Right cardiac atrium (tissue), 5 donors: ENCODE measurements at regions of chr1 and their contacts with region 1.

Region 1: DNA sequence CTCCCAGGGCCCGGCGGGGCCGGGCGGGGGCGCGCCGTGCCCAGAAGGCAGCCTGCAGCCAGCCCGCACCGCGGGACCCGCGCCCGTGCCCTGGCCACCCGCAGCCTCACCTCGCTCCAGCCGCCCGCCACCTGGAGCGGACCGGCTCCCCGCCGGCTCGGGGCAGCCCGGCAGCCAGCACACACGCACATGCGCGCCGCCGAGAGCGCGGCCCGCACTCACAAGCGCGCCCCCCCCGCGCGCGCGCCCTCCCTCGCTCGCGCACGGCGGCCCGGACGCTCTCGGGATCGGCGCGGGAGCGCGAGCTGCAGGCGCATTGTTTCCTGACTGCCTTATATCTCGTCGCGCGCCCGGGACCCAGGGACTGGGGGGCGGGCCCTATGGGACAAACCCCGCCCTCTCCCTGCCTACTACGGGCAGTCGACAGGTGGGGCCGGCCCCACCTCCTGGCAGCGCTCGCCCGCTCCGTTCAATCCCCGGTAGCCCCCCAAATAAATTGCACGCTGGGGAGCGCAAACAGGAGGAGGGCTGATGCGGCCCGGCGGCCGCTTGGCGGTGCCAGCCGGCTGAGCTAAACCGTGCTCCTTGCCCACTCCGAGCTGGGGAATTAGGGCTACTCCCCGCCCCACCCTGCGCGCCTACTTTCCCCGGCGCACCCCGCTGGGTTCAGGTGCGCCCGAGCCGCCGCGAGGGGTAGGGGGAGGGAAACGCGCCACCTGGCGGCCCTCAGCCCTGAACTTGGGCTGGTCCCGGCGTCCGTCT is at the start of gene MYCL:
- DNase-seq: peak; percentile 52 to 86 (median 82)
- ATAC-seq: peak; percentile 84 to 88
- H3K4me3 ChIP-seq: peak within 1 kb of the TSS; percentile 80
- H3K27ac ChIP-seq: no peak within 1 kb of the TSS
- H3K4me1 ChIP-seq: no peaks in the 10 kb centered on the region
- H3K27me3 ChIP-seq: no peaks in the 10 kb centered on the region
- total RNA-seq, gene MYCL: 0.33 to 0.97 (median 0.57) TPM

Region 2: DNA sequence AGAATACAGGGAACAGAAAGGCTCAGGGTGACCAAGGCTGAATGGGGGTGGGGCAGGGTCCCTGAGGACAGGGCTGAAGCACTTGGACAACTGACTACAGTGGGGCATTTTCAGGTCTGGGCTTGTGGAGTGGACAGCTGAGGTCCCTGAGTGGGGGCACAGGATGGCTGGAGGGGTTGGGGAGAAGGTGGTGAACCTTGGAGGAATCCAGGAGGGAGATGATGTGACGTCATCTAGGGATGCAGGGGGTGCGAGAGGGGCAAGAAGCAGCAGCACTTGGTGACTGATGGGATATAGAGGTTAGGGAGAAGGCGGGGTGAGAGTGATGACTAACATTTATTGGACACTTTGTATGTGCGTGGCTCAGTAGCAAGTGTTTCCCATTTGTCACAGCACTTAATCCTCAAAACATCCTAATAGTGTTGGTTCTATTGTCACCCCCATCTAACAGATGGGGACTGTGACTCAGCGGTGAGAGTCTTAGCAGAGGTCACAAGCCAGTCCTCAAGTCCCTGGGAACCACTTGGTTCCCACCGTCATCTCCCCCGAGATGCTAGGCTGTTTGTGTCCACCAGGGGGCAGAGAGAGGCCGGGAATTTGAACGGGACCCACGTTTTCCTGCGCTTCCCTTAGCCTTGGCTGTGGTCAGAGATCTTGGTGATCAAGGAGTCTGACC is 85.3 kb before region 1 on chr1:
- intact Hi-C with region 1: loop called in 3 of 4 experiments (anchors 5 to 10 kb)
- DNase-seq: peak; percentile 62 to 86 (median 82)
- ATAC-seq: peak; percentile 66 to 80
- H3K4me3 ChIP-seq: no peak overlapping the region
- H3K27ac ChIP-seq: no peak overlapping the region
- H3K4me1 ChIP-seq: no peaks in the 10 kb centered on the region
- H3K27me3 ChIP-seq: no peaks in the 10 kb centered on the region

Region 3: GRCh38 chr1:39822091-39822490 is 79.8 kb before region 1 on chr1:
- intact Hi-C with region 1: loop called in 3 of 4 experiments (anchors 5 to 10 kb)
- DNase-seq: no peak
- ATAC-seq: no peak
- H3K4me3 ChIP-seq: no peak overlapping the region
- H3K27ac ChIP-seq: no peak overlapping the region
- H3K4me1 ChIP-seq: no peaks in the 10 kb centered on the region
- H3K27me3 ChIP-seq: no peaks in the 10 kb centered on the region

Region 4: DNA sequence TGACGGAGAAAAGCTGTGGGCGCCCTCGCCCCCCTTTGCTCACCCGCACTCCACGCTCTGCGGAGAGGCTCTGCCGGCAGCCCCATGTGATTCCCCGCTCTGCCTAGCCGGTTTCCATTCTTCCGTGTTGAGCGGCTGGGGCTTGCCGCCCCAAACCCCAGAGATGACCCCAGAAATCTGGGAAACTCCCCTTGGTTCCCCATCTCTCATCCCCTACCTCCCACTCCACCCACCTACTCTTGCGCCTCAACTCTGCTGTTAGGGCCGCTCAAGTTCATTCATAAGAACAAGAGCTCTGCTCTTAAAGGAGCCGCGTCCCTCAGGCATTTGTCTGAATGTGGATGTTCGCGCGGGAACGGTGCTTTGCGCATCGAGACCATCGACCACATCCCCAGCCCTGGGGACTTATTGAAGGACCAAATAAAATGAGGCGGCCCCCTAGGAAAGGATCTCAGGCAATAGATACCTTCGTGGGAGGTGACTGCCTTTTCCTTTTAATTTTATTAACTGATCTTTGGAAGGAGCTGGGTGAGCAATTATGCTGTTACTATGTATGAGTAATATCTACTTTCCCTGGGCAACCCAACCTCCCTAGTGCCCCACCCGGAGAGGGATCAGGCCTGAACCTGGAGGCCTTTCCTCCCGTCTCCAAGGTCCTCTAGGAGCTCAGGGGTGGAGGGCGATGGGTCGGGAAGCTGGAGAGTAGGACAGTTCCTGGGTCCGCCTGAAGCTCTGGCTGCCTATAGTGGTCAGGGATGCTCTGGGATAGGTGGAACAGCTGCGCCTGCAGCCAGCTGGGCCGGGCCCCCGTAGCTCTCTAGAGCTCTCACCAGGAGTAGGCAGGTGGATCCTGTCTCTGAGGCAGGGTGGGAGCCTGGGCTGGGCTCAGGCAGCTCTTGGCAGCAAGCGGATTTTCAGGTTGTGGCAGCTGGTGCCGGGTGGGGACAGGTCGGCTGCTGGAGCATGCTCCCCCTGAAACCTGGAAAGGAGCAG is 54.0 kb after region 1 on chr1:
- intact Hi-C with region 1: no loop called
- DNase-seq: peak in 1 of 3 donors; percentile 57
- ATAC-seq: peak in 1 of 2 donors; percentile 26
- H3K4me3 ChIP-seq: peak overlapping the region; percentile 55
- H3K27ac ChIP-seq: no peak overlapping the region
- H3K4me1 ChIP-seq: no peaks in the 10 kb centered on the region
- H3K27me3 ChIP-seq: no peaks in the 10 kb centered on the region